WTC11 (cell line): ENCODE measurements at regions of chr1 and their contacts with region 1.

Region 1: GRCh38 chr1:32247983-32248889 is 1.2 kb downstream of the FAM167B start:
- DNase-seq: peak; percentile 96
- ATAC-seq: peak; percentile 85
- H3K4me3 Mint-ChIP-seq: peak overlapping the region; percentile 57
- H3K27ac Mint-ChIP-seq: peak overlapping the region; percentile 53
- H3K4me1 Mint-ChIP-seq: peaks cover 40% of the 10 kb centered on the region
- H3K27me3 Mint-ChIP-seq: peaks cover 4% of the 10 kb centered on the region
- CTCF ChIP-seq: peak; percentile 95

Region 2: GRCh38 chr1:32221980-32222755 is 26.1 kb before region 1 on chr1 and contains the starts of genes EIF3I and TMEM234:
- CTCF ChIA-PET with region 1: interaction called, 69 read pairs
- POLR2A ChIA-PET with region 1: no interaction called
- DNase-seq: peak; percentile 93
- ATAC-seq: peak; percentile 90
- H3K4me3 Mint-ChIP-seq: peak within 1 kb of the TSS; percentile 95
- H3K27ac Mint-ChIP-seq: peak within 1 kb of the TSS; percentile 91
- H3K4me1 Mint-ChIP-seq: peaks cover 13% of the 10 kb centered on the region
- H3K27me3 Mint-ChIP-seq: no peaks in the 10 kb centered on the region
- CTCF ChIP-seq: no peak
- total RNA-seq, gene EIF3I: 237 to 243 TPM (median 241 TPM) in 3 replicates
- total RNA-seq, gene TMEM234: 10.3 to 11.9 TPM (median 11.4 TPM) in 3 replicates

Region 3: GRCh38 chr1:32266921-32267591 is 18.8 kb after region 1 on chr1:
- CTCF ChIA-PET with region 1: interaction called, 15 read pairs
- POLR2A ChIA-PET with region 1: interaction called, 5 read pairs
- DNase-seq: no peak
- ATAC-seq: no peak
- H3K4me3 Mint-ChIP-seq: no peak overlapping the region
- H3K27ac Mint-ChIP-seq: peak overlapping the region; percentile 46; the same call in 1 of the 2 replicates
- H3K4me1 Mint-ChIP-seq: peaks cover 13% of the 10 kb centered on the region
- H3K27me3 Mint-ChIP-seq: no peaks in the 10 kb centered on the region
- CTCF ChIP-seq: no peak

Region 4: DNA sequence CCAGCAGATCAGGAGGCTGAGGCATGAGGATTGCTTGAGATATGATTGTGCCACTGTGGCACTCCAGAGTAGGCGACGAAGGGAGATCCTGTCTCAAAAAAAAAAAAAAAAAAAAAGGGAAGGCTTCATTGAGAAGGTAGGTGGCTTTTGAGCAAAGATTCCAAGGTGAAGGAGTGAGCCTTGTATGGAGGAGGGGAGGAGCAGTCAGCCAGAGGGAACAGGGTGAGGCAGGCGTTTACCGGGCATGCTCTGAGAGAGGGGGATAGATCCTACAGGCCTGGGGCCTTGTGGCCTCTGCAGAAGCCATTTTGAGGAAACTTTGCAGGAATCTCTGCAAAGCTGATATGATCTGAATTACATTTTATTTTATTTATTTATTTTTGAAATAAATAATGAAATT is 38.5 kb after region 1 on chr1:
- CTCF ChIA-PET with region 1: interaction called, 18 read pairs
- POLR2A ChIA-PET with region 1: interaction called, 5 read pairs
- DNase-seq: peak; percentile 19
- ATAC-seq: peak; percentile 71
- H3K4me3 Mint-ChIP-seq: no peak overlapping the region
- H3K27ac Mint-ChIP-seq: peak overlapping the region; percentile 85
- H3K4me1 Mint-ChIP-seq: peaks cover 8% of the 10 kb centered on the region
- H3K27me3 Mint-ChIP-seq: no peaks in the 10 kb centered on the region
- CTCF ChIP-seq: no peak

Region 5: DNA sequence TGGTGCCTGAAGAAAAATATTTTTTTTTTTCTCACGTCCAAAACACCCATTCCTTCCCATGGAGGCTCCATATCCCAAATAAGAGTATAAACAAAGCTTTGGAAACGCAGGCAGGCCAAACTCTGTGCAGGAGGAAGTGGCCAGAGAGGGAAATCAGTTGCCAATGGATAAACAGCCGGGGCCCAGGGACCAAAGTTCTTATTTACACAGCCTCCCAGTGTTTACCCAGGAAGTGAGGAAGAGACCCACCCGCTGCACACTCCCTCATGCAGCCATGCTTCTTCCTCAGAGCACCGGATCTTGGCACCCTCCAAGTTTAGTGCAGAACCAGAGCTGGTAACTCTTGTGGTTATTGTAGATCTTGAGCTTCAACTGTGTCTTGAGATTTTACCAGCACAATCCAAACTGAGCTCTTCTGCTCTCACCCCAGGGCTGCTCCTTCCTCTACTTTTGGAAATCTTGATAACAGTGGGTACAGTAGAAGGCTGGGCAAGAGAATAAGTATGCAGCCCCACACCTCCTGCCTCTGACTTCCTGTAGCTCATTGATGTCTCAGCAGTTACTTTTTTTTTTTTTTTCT is 73.6 kb after region 1 on chr1:
- CTCF ChIA-PET with region 1: interaction called, 22 read pairs
- POLR2A ChIA-PET with region 1: interaction called, 4 read pairs
- DNase-seq: no peak
- ATAC-seq: no peak
- H3K4me3 Mint-ChIP-seq: no peak overlapping the region
- H3K27ac Mint-ChIP-seq: peak overlapping the region; percentile 36; the same call in 1 of the 2 replicates
- H3K4me1 Mint-ChIP-seq: 0 out of 2 replicates have a peak, but pooled peaks cover 3% of the 10 kb centered on the region
- H3K27me3 Mint-ChIP-seq: no peaks in the 10 kb centered on the region
- CTCF ChIP-seq: no peak

Region 6: GRCh38 chr1:32394141-32394889 is 146.1 kb after region 1 on chr1 and contains the start of gene BSDC1:
- CTCF ChIA-PET with region 1: interaction called, 11 read pairs
- POLR2A ChIA-PET with region 1: interaction called, 4 read pairs
- DNase-seq: peak; percentile 99
- ATAC-seq: peak; percentile 97
- H3K4me3 Mint-ChIP-seq: peak within 1 kb of the TSS; percentile 98
- H3K27ac Mint-ChIP-seq: peak within 1 kb of the TSS; percentile 100
- H3K4me1 Mint-ChIP-seq: peaks cover 12% of the 10 kb centered on the region
- H3K27me3 Mint-ChIP-seq: no peaks in the 10 kb centered on the region
- CTCF ChIP-seq: no peak
- total RNA-seq, gene BSDC1: 42.4 to 44.3 TPM (median 43.6 TPM) in 3 replicates